Transverse colon (tissue), 4 donors: ENCODE measurements at regions of chr14 and their contacts with region 1.

Region 1: DNA sequence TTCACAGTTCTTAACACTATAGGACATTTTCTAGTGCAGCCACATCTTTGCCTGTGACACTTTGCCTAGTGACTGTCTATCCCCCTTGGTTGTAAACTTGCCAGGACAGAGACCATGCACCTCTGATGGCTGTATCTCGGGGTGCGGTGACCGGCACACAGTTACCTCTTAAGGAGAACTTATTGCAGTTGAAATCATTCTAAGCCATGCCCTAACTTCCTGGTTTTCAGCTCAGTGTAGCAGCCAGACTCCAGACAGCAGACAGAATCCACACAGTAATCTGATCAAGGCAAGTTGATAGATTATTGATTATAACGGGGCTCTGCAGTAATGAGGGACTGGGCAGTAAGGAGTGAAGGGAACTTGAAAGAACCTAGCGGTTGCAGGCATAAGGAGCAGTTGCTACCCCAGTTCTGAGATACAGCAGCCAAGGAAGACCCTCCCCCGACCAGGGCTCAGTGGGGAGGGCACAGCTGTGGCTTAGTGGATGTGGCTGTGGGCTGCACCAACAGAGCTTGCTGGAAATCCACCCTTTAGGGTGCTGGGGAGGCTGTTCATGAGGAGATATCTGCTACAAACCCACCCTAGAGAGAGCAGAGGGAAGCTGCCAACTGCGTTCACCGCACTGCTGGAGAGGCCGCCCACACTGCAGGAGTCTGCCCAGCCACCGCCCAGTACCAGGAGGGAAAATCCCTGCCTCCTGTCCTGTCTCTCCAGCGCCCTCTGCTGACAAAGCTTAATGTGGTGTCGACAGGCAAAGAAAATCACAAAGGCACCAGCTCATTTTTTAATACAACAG is 58.2 kb upstream of the BEGAIN start:
- DNase-seq: peak; percentile 93
- H3K4me3 ChIP-seq: no peak overlapping the region
- H3K27ac ChIP-seq: no peak overlapping the region
- H3K4me1 ChIP-seq: peaks cover 8 to 25% (median 14%) of the 10 kb centered on the region in 4 donors
- H3K27me3 ChIP-seq: no peaks in the 10 kb centered on the region
- CTCF ChIP-seq: peak; percentile 70 to 91 (median 80)
- EP300 ChIP-seq: no peak
- POLR2A ChIP-seq: no peak

Region 2: DNA sequence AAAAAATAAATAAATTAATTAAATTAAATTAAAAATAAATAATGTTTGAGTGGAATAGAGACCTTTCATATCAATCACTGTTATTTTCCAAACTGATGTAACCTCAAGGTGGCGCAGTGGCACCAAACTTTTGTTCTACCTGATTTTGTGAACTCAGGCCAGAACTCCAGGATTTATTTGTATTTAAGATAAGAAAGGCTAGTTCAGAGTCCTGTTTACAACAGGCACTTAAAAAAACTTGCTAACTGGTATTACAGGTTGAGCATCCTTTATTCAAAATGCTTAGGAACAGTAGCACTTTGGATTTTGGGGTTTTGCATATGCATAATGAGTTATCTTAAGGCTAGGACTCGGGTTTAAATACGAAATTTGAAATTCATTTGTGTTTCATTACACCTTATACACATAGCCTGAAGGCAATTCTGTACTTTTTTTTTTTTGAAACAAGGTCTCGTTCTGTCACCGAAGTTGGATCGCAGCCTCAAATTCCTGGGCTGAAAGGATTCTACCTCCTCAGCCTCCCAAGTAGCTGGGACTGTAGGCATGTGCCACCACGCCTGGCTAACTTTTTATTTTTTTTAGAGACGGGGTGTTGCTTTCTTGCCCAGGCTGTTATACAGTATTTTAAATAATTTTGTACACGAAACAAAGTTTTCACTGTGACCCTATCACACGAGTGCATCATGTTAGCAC is 374.0 kb before region 1 on chr14:
- in situ Hi-C with region 1: loop called in 1 of 4 experiments (anchors 25 kb)
- intact Hi-C with region 1: no loop called
- DNase-seq: peak; percentile 72
- H3K4me3 ChIP-seq: no peak overlapping the region
- H3K27ac ChIP-seq: peak overlapping the region in 2 of 4 donors; percentile 20 to 23
- H3K4me1 ChIP-seq: peaks cover 22 to 49% (median 28%) of the 10 kb centered on the region in 4 donors
- H3K27me3 ChIP-seq: no peaks in the 10 kb centered on the region
- CTCF ChIP-seq: peak; percentile 36 to 63 (median 49)
- EP300 ChIP-seq: no peak
- POLR2A ChIP-seq: no peak

Region 3: GRCh38 chr14:100383727-100384158 is 261.6 kb before region 1 on chr14:
- in situ Hi-C with region 1: loop called (anchors 5 to 10 kb)
- intact Hi-C with region 1: no loop called
- DNase-seq: peak; percentile 75
- H3K4me3 ChIP-seq: no peak overlapping the region
- H3K27ac ChIP-seq: no peak overlapping the region
- H3K4me1 ChIP-seq: peaks cover 0 to 31% (median 14%) of the 10 kb centered on the region in 4 donors
- H3K27me3 ChIP-seq: no peaks in the 10 kb centered on the region
- CTCF ChIP-seq: peak; percentile 77 to 90 (median 79)
- EP300 ChIP-seq: no peak
- POLR2A ChIP-seq: no peak

Region 4: DNA sequence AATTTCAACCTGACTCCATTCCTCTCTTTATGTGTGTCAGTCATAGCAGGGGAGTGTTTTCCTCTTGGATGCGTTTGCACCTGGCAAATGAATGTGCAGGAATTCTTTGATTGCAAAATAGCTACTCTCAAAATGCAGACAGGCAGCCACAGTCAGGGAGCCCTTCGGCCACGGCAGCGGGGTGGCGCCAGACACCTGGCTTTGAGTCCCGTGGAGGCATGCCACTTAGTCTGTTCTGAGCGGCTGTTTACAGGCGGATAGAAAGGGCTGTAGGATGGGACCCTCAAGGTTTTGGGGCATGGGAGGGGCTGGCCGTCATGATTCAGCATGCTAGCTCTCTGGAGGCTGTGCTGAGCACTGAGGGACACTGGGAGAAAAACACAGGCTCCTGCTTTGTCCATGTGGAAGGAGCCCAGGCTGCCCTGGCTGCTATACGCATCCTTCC is 205.2 kb before region 1 on chr14:
- in situ Hi-C with region 1: loop called in 1 of 4 experiments (anchors 10 kb)
- intact Hi-C with region 1: no loop called
- DNase-seq: peak; percentile 82
- H3K4me3 ChIP-seq: no peak overlapping the region
- H3K27ac ChIP-seq: peak overlapping the region; percentile 78 to 85 (median 80)
- H3K4me1 ChIP-seq: peaks cover 17 to 76% (median 49%) of the 10 kb centered on the region in 4 donors
- H3K27me3 ChIP-seq: no peaks in the 10 kb centered on the region
- CTCF ChIP-seq: peak; percentile 55 to 89 (median 63)
- EP300 ChIP-seq: no peak
- POLR2A ChIP-seq: no peak

Region 5: DNA sequence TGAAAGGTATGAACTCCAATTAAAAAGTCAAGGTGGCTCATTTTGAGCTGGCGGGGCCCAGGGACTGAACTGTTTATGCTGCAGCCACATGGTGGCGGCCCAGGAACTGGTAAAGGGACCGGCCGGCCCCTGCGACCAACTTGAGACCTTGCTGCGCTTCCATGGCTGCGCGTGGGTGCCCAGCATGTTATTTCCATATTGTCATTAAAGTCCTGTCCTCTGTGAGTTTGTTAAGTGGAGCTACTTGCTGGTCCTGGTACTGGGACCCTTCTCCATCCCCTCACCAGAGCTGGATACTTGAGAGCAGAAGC is 120.5 kb before region 1 on chr14:
- in situ Hi-C with region 1: loop called in 1 of 4 experiments (anchors 10 kb)
- intact Hi-C with region 1: no loop called
- DNase-seq: no peak
- H3K4me3 ChIP-seq: no peak overlapping the region
- H3K27ac ChIP-seq: no peak overlapping the region
- H3K4me1 ChIP-seq: peaks cover 0 to 5% (median 2%) of the 10 kb centered on the region in 4 donors
- H3K27me3 ChIP-seq: no peaks in the 10 kb centered on the region
- CTCF ChIP-seq: peak in 3 of 5 experiments; percentile 6 to 39 (median 17)
- EP300 ChIP-seq: no peak
- POLR2A ChIP-seq: no peak

Region 6: GRCh38 chr14:100617410-100618317 is 27.7 kb before region 1 on chr14:
- in situ Hi-C with region 1: no loop called
- intact Hi-C with region 1: no loop called
- DNase-seq: peak; percentile 6
- H3K4me3 ChIP-seq: no peak overlapping the region
- H3K27ac ChIP-seq: no peak overlapping the region
- H3K4me1 ChIP-seq: peaks cover 0 to 27% (median 6%) of the 10 kb centered on the region in 4 donors
- H3K27me3 ChIP-seq: no peaks in the 10 kb centered on the region
- CTCF ChIP-seq: no peak
- EP300 ChIP-seq: no peak
- POLR2A ChIP-seq: no peak